Prostate gland (tissue), 2 donors: ENCODE measurements at regions of chr2 and their contacts with region 1.

Region 1: DNA sequence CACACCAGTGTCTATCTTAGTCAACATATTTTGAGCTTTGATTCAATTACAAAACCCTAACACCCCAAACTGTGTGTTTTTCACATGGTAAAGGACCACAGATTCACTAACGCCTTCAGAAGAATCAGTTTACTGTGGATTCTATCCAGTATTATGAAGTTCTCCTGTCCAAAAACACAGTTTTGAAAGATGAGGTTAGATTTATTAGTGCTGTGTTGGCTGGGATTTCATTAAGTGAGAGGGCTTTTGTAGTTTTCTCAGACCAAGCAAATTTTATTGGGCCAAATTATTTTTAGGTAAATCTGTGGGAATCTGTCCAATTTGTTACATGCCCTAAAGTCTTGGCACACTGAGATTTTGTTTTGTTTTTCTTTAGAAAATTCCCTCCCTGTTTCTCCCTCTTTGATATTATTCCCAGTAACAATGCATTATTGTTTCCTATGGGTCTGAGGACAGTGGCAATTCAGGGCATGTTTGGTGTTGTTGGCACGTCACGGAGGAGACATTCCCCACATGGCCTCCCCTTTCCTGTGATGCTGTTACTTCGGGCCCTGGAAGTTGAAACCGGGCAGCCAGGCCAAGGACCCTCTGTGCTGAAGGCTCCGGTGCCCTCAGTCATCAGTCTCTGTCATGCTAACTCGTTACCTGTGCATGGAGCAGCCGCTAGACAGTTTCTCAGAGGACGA is 87.5 kb upstream of the ALKAL2 start:
- DNase-seq: no peak
- H3K4me3 ChIP-seq: no peak overlapping the region
- H3K27ac ChIP-seq: peak overlapping the region in 1 of 2 donors; percentile 44
- H3K4me1 ChIP-seq: no peaks in the 10 kb centered on the region
- H3K27me3 ChIP-seq: no peaks in the 10 kb centered on the region
- CTCF ChIP-seq: no peak
- POLR2A ChIP-seq: no peak

Region 2: DNA sequence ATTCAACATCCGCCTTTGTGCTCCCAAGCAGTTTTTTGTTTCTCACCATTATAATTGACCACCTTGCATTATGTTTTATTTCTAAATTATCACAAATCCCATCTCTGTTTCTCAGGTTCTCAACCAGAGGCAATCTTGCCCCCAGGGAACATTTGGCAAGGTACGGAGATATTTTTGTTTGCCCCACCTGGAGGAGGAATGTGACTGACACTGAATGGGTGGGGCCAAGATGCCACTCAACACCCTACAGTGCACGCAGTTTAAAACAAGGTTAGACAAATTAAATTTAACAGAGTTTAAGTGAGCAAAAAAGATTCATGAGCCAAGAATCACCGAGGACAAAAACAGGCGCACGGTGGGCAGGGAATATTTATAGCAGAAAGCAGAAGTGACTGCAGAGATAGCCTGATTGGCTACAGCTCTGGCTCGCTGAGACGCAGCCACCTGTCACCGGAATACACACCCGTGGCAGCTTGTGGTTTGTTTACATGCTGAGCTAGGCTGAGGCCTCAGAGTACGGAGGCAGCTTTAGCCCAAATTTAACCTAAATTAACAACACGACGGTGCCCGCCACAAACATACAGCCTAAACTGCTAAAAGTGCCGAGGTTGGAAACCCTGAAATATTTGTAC is 62.5 kb after region 1 on chr2:
- intact Hi-C with region 1: loop called (anchors 10 kb)
- DNase-seq: no peak
- H3K4me3 ChIP-seq: no peak overlapping the region
- H3K27ac ChIP-seq: peak overlapping the region in 1 of 2 donors; percentile 8
- H3K4me1 ChIP-seq: no peaks in the 10 kb centered on the region
- H3K27me3 ChIP-seq: peaks cover 3% of the 10 kb centered on the region
- CTCF ChIP-seq: no peak
- POLR2A ChIP-seq: no peak